Activated CD4-positive, alpha-beta memory T cell treated with anti-CD3 and anti-CD28 coated beads for 36 hours (primary cell): ENCODE measurements at regions of chr12 and their contacts with region 1.

Region 1: DNA sequence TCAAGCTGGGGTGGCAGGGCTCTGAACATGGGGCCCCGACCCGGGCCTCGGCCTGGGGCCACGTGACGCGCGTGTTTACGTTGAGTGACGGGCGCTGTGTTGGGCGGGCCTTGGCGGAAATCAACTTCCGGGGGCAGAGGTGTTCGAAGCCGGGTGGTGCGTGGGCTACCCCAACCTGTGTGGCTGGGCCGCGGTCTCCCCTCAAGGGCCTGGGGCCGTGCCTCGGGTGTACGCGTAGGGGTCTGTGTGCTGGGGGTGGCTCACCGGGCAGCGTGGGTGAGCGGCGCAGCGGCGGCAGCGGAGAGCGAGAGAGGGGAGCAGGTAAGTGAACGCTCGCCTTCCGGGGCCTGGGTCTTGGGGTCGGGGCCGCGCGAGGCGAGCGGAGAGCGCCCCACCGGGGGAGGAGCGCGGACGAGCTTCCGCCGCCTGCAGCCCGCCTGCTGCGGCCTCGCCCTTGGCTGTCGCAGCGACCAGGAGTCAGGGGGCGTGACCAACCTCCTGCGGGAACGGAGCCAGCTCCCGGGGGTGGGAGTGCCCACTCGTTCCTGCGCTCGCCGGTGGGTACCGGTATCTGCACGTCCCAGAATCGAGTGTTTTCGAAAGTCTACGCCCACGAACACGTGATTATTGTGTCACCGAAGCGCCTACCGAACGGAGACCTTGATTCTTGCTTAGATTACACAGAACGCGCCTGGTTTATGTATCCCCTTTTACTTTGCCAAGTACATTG is at the start of gene CCDC91:
- DNase-seq: peak; percentile 92
- H3K4me3 Mint-ChIP-seq: peak within 1 kb of the TSS; percentile 98
- H3K27ac Mint-ChIP-seq: peak within 1 kb of the TSS; percentile 99
- H3K4me1 Mint-ChIP-seq: peaks cover 57% of the 10 kb centered on the region
- H3K27me3 Mint-ChIP-seq: no peaks in the 10 kb centered on the region
- total RNA-seq, gene CCDC91: 16.5 to 19.7 TPM

Region 2: GRCh38 chr12:27644158-27644845 is 546.2 kb before region 1 on chr12:
- CTCF ChIA-PET with region 1: no interaction called
- POLR2A ChIA-PET with region 1: no interaction called
- intact Hi-C with region 1: no loop called
- DNase-seq: no peak
- H3K4me3 Mint-ChIP-seq: no peak overlapping the region
- H3K27ac Mint-ChIP-seq: no peak overlapping the region
- H3K4me1 Mint-ChIP-seq: no peaks in the 10 kb centered on the region
- H3K27me3 Mint-ChIP-seq: no peaks in the 10 kb centered on the region

Region 3: DNA sequence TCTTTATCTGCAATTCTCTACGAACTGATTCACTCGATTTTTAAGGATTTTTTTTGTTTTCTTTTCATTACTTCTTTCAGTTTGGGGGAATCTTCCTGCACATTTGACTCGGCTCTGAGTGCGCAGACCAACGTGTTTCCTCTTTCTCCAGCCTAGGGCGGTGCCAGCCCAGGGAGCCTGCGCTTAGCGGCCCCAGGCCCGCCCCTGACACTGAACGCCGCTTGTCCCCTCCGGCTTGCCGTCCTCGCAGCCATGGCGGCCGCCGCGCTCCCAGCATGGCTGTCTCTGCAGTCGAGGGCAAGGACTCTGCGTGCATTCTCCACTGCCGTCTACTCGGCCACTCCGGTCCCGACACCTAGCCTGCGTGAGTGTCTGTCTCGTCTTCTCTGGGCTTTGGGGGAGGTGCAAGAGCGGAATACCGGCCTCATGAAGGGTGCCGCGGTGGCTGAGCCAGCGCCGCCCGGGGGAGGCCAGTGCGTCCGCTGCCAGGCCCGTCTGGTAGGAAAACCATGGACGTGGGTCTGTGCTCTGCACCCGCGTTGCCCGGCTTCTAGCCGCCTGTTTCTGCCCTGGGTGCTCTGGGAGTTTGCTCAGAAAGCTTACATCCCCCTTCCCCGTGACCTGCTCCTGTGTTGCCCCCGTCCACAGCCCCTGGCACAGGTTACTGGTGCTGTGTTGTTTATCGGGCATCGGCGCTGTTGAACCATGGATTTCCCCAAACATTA is 479.7 kb before region 1 on chr12 and contains the start of gene MRPS35:
- CTCF ChIA-PET with region 1: no interaction called
- POLR2A ChIA-PET with region 1: no interaction called
- intact Hi-C with region 1: loop called (anchors 2 kb)
- DNase-seq: peak; percentile 95
- H3K4me3 Mint-ChIP-seq: peak within 1 kb of the TSS; percentile 93
- H3K27ac Mint-ChIP-seq: peak within 1 kb of the TSS; percentile 90
- H3K4me1 Mint-ChIP-seq: peaks cover 17% of the 10 kb centered on the region
- H3K27me3 Mint-ChIP-seq: peaks cover 3% of the 10 kb centered on the region
- total RNA-seq, gene MRPS35: 49.2 to 50.2 TPM

Region 4: GRCh38 chr12:28223025-28223554 is 32.6 kb after region 1 on chr12:
- CTCF ChIA-PET with region 1: no interaction called
- POLR2A ChIA-PET with region 1: interaction called, 14 read pairs
- intact Hi-C with region 1: loop called (anchors 1 kb)
- DNase-seq: peak; percentile 16
- H3K4me3 Mint-ChIP-seq: peak overlapping the region; percentile 42
- H3K27ac Mint-ChIP-seq: peak overlapping the region; percentile 76
- H3K4me1 Mint-ChIP-seq: peaks cover 45% of the 10 kb centered on the region
- H3K27me3 Mint-ChIP-seq: no peaks in the 10 kb centered on the region

Region 5: DNA sequence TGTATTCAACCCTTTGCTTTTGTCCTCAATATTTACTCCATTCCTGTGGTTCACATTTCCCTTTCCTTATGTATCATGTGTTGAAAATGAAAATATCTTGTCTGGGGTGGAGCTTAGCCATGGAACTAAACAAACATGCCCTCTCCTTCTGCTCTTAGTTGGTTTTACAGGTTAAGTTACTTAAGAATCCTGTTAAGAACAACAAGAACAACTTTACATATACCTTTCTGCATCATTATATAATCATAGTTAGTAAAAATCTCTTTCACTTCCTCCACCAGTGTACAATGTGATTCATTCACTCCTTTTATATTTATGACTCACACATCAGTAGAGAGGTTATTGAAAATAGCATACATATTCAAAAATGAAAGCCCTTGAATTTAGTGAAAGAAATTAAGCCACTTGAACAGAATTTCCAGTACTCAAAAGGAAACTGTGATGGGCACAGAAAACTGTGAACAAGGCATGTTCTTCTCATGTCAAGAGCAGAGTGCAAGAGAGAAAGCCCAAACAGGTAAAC is 307.5 kb after region 1 on chr12:
- CTCF ChIA-PET with region 1: no interaction called
- POLR2A ChIA-PET with region 1: no interaction called
- intact Hi-C with region 1: loop called (anchors 10 kb)
- DNase-seq: no peak
- H3K4me3 Mint-ChIP-seq: no peak overlapping the region
- H3K27ac Mint-ChIP-seq: no peak overlapping the region
- H3K4me1 Mint-ChIP-seq: peaks cover 14% of the 10 kb centered on the region
- H3K27me3 Mint-ChIP-seq: no peaks in the 10 kb centered on the region

Region 6: GRCh38 chr12:28550757-28551704 is 360.5 kb after region 1 on chr12:
- CTCF ChIA-PET with region 1: no interaction called
- POLR2A ChIA-PET with region 1: no interaction called
- intact Hi-C with region 1: loop called (anchors 2 kb)
- DNase-seq: no peak
- H3K4me3 Mint-ChIP-seq: no peak overlapping the region
- H3K27ac Mint-ChIP-seq: no peak overlapping the region
- H3K4me1 Mint-ChIP-seq: peaks cover 12% of the 10 kb centered on the region
- H3K27me3 Mint-ChIP-seq: no peaks in the 10 kb centered on the region